Activated naive CD4-positive, alpha-beta T cell treated with anti-CD3 and anti-CD28 coated beads for 36 hours (primary cell): ENCODE measurements at regions of chrX and their contacts with region 1.

Region 1: GRCh38 chrX:129953881-129954280 is 28.6 kb upstream of the BCORL1 start:
- DNase-seq: no peak
- H3K4me3 Mint-ChIP-seq: peak overlapping the region; percentile 75
- H3K27ac Mint-ChIP-seq: no peak overlapping the region
- H3K4me1 Mint-ChIP-seq: peaks cover 7% of the 10 kb centered on the region
- H3K27me3 Mint-ChIP-seq: peaks cover 2% of the 10 kb centered on the region

Region 2: DNA sequence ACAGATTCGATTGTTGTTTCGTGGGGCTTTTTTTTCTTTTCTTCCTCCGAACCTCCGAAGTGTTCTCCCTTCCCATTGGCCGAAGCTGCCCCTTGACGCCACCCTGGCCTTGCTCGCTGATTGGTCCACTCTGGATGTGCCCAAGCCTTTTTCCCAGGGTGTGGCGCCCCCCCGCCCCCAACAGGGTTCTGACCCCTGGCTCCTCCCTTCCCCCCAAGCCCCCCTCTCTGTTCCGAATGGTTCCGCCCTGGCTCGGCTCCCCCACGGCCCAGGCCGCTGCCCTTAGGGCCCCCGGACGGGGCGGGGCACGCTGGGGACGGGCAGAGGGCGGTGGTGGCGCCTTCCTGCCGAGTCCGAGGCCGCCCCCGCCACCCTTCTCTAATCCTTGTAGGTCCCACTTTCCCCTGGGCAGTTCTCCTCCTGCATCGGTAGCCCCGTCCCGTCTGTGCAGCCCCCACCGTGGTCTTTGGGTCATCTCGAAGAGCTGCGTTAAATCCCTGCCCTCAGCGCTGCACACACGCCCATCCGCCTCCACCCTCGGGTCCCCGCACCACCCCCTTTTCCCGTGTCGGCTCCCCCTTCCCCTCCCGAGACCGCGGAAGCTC is 22.4 kb before region 1 on chrX:
- CTCF ChIA-PET with region 1: no interaction called
- intact Hi-C with region 1: loop called (anchors 2 kb)
- DNase-seq: peak; percentile 43
- H3K4me3 Mint-ChIP-seq: peak overlapping the region; percentile 65
- H3K27ac Mint-ChIP-seq: no peak overlapping the region
- H3K4me1 Mint-ChIP-seq: peaks cover 5% of the 10 kb centered on the region
- H3K27me3 Mint-ChIP-seq: peaks cover 4% of the 10 kb centered on the region